CD14-positive monocyte (primary cell): ENCODE measurements at regions of chr2 and their contacts with region 1.

Region 1: DNA sequence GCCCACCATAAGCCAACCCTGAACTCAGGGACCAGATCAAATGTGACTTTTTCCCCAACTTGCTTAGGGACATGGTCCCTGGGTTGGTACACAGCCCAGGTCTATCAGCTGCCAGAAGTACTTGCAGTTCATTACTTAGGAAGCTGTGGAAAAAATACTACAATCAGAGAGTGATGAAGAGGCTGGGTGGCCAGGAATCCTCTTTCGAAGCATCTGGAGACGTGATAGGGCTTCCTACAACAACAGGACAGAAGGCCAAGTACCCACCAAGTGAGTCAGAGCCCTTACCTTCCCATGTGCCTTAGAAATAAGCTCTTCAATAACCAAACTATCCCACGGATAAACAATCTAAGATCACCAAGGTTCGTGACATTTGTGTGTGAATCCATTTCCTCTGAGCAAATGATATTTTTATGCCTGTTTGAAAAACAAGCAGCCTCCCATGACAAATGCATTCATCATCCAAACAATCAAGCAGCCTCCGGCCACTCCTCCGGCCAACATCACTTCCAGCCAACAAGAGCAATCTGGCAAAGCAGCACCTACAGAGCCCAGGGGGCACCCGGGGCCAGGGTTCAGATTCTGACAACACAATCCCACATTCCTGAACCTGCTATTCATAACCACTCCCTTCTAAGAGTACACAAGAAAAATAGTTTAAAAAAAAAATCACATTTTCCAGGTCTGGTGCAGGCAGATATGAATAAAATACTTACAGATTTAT is 26.4 kb downstream of the TBC1D8 start:
- DNase-seq: no peak
- H3K4me3 ChIP-seq: no peak overlapping the region
- H3K4me3 Mint-ChIP-seq: peak overlapping the region in 1 of 2 donors; percentile 61
- H3K27ac ChIP-seq: no peak overlapping the region
- H3K27ac Mint-ChIP-seq: peak overlapping the region in 2 of 7 donors; percentile 38 to 43
- H3K4me1 ChIP-seq: peaks cover 32 to 55% of the 10 kb centered on the region in 2 donors
- H3K4me1 Mint-ChIP-seq: peaks cover 71% of the 10 kb centered on the region
- H3K27me3 ChIP-seq: no peaks in the 10 kb centered on the region
- H3K27me3 Mint-ChIP-seq: peaks cover 0 to 2% (median 0%) of the 10 kb centered on the region in 3 donors
- CTCF ChIP-seq: no peak

Region 2: DNA sequence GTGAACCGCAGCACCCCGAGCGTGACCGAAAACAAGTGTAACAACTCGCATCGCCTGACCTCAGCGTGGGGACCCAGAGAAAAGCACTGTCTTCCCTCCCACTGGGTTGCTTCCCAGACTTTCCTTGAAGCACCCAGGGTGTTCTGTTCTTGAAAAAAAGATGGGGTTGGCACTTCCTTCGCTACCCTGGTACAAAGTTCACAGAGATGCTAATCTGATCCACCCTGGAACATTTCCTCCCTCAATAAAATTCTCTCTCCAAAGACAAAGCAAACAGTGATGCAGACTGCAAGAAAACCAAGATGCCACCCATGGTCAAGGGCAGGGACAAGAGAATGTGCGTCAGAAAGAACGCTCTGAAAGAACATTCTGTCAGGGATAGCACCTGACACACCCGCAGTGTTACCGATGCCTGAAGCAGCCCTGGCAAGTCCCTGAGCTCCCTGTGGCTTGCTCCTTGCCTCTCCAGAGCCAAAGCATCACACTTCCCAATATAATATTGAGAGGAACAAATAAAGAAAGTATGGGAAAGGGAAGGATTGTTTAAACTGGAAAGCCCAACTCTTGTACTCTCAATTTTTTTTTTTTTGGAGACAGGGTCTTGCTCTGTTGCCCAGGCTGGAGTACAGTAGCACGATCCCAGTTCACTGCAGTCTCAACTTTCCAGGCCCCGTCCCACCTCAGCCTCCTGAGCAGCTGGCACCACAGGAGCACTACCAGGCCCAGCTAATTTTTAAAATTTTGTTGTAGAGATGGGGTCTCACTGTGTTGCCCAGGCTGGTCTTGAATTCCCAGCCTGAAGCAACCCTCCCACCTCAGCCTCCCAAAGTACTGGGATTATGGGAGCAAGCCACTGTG is 44.4 kb before region 1 on chr2:
- intact Hi-C with region 1: loop called in 1 of 2 experiments (anchors 5 kb)
- DNase-seq: no peak
- H3K4me3 ChIP-seq: no peak overlapping the region
- H3K4me3 Mint-ChIP-seq: no peak overlapping the region
- H3K27ac ChIP-seq: no peak overlapping the region
- H3K27ac Mint-ChIP-seq: no peak overlapping the region
- H3K4me1 ChIP-seq: no peaks in the 10 kb centered on the region
- H3K4me1 Mint-ChIP-seq: peaks cover 4% of the 10 kb centered on the region
- H3K27me3 ChIP-seq: no peaks in the 10 kb centered on the region
- H3K27me3 Mint-ChIP-seq: no peaks in the 10 kb centered on the region
- CTCF ChIP-seq: no peak